Calu3 (cell line): ENCODE measurements at regions of chr3 and their contacts with region 1.

Region 1: DNA sequence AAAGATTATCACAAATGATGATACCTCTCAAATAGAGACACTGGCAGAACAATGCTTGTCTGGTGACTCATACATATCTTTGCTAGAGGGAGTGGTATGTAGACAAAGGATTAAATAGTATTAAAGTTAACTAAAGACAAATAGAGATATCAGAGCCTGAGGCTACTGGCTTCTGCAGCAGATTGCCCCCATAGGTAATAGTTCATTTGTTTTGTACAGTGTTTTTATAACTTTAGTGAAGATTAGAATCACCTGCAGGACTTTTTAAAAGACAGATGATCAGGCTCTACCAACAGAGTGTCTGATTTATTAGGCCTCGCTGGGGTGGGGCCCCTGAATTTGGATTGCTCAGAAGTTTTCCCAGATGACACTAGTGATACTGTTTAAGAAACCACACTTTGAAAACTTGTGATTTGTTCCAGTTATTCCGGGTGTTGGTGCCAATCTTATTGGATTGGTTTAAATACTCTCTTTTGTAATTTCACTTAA is 96.4 kb downstream of the NAALADL2 start:
- DNase-seq: no peak
- H3K4me3 Mint-ChIP-seq: no peak overlapping the region
- H3K27ac Mint-ChIP-seq: peak overlapping the region; percentile 89
- H3K4me1 Mint-ChIP-seq: peaks cover 86% of the 10 kb centered on the region
- H3K27me3 Mint-ChIP-seq: no peaks in the 10 kb centered on the region
- CTCF ChIP-seq: no peak

Region 2: DNA sequence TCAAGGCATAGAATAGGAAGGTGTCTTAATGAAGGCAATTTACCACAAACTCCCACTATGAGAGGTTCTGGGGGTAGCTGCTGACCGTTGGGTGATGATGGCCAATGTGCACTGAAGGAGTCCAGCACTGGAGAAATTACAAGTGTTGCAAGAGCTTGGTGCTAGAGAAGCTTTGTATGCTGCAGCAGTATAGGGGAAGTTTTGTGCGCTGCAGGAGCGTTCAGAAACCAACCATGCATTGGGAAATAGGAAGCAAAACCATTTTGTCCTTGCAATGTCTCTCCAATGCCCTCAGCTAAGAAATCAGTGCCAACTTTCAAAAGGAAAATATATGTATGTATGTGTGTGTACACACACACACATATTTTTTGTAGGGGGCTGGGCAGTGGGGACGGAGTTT is 538.0 kb before region 1 on chr3:
- CTCF ChIA-PET with region 1: no interaction called
- intact Hi-C with region 1: loop called (anchors 10 kb)
- DNase-seq: no peak
- H3K4me3 Mint-ChIP-seq: no peak overlapping the region
- H3K27ac Mint-ChIP-seq: no peak overlapping the region
- H3K4me1 Mint-ChIP-seq: no peaks in the 10 kb centered on the region
- H3K27me3 Mint-ChIP-seq: no peaks in the 10 kb centered on the region
- CTCF ChIP-seq: no peak

Region 3: GRCh38 chr3:174547801-174548435 is 407.6 kb before region 1 on chr3:
- CTCF ChIA-PET with region 1: no interaction called
- intact Hi-C with region 1: loop called (anchors 10 kb)
- DNase-seq: no peak
- H3K4me3 Mint-ChIP-seq: no peak overlapping the region
- H3K27ac Mint-ChIP-seq: no peak overlapping the region
- H3K4me1 Mint-ChIP-seq: peaks cover 17% of the 10 kb centered on the region
- H3K27me3 Mint-ChIP-seq: no peaks in the 10 kb centered on the region
- CTCF ChIP-seq: no peak

Region 4: DNA sequence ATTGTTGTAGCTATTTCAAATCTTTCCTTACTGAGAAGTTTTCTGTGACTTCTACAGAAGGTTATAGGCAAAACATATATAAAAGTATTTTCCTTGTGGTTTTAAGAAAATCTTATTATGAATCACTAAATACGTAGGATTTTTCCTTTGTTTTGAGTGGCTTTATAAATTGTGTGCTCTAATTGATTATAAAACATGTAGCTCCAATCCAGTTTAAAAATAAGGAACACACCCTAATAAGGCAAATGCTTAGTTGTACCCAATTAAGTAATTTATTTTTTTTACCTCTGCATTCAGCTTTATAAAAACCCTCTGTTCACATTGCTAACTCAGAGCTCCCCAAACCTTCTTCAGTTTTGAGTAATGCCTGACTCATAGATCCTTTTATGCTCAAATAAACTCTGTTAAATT is 311.6 kb after region 1 on chr3:
- CTCF ChIA-PET with region 1: no interaction called
- intact Hi-C with region 1: loop called (anchors 10 kb)
- DNase-seq: no peak
- H3K4me3 Mint-ChIP-seq: no peak overlapping the region
- H3K27ac Mint-ChIP-seq: peak overlapping the region; percentile 14
- H3K4me1 Mint-ChIP-seq: peaks cover 8% of the 10 kb centered on the region
- H3K27me3 Mint-ChIP-seq: no peaks in the 10 kb centered on the region
- CTCF ChIP-seq: no peak